Motor neuron (in vitro differentiated cells): ENCODE measurements at regions of chr1 and their contacts with region 1.

Region 1: GRCh38 chr1:183567584-183567983 is 22.7 kb downstream of the NCF2 start:
- ATAC-seq: peak in 7 of 8 experiments; percentile 9 to 85 (median 50)
- H3K4me3 ChIP-seq: no peak overlapping the region
- H3K27ac ChIP-seq: no peak overlapping the region
- H3K4me1 ChIP-seq: no peaks in the 10 kb centered on the region

Region 2: GRCh38 chr1:183622884-183623785 is 55.6 kb after region 1 on chr1:
- in situ Hi-C with region 1: loop called in 1 of 9 experiments (anchors 10 kb)
- ATAC-seq: peak; percentile 78 to 99 (median 94)
- H3K4me3 ChIP-seq: no peak overlapping the region
- H3K27ac ChIP-seq: no peak overlapping the region
- H3K4me1 ChIP-seq: no peaks in the 10 kb centered on the region

Region 3: GRCh38 chr1:183804881-183805841 is 237.6 kb after region 1 on chr1 and contains the start of gene RGL1:
- in situ Hi-C with region 1: no loop called
- ATAC-seq: peak; percentile 84 to 97 (median 94)
- H3K4me3 ChIP-seq: peak within 1 kb of the TSS; percentile 43 to 55 (median 49)
- H3K27ac ChIP-seq: peak within 1 kb of the TSS; percentile 0 to 35
- H3K4me1 ChIP-seq: peaks cover 0 to 17% of the 10 kb centered on the region in 2 donors
- total RNA-seq, gene RGL1: 8.4 to 92.5 (median 18.0) TPM